ENCODE measurements at regions of chr17 and their contacts with region 1.

Region 1: DNA sequence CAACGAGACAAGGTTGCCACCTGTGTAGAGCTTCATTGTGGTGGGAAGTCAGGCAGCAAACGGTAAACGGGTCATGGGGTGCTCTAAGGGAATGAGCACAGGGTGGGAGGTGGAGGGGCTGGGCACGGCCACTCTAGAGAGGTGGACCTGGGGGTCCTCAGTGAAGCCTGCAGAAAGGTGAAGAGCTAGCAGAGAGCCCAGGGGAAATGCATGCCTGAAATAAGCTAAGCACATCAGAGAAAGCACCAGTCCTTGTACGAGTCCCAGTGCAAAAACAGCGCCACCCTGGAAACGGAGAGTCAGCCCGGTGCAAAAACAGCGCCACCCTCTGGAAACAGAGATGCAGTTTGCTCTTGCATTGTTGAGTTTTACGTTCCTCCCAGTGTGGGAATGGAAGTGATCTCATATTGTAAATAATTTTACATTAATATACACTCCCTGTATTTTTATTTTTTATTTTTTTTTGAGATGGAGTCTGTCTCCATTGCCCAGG is 65.0 kb downstream of the TBC1D16 start:
- DNase-seq: no peak
- H3K4me3 ChIP-seq: no peak overlapping the region
- H3K27ac ChIP-seq: no peak overlapping the region
- H3K4me1 ChIP-seq: peaks cover 0 to 4% (median 2%) of the 10 kb centered on the region in 4 experiments; a peak in 4 of 7 replicates
- H3K27me3 ChIP-seq: no peaks in the 10 kb centered on the region
- CTCF ChIP-seq: peak; percentile 87 to 98 (median 95)
- EP300 ChIP-seq: no peak
- POLR2A ChIP-seq: no peak
- RAD21 ChIP-seq: peak; percentile 77 to 85

Region 2: GRCh38 chr17:79844869-79845600 is 125.6 kb before region 1 on chr17:
- CTCF ChIA-PET with region 1: interaction called, 10 read pairs
- POLR2A ChIA-PET with region 1: no interaction called
- DNase-seq: peak in 1 of 2 experiments; percentile 88
- H3K4me3 ChIP-seq: peak overlapping the region in 3 of 4 experiments; percentile 20 to 60 (median 23); a peak in 4 of 8 replicates
- H3K27ac ChIP-seq: no peak overlapping the region
- H3K4me1 ChIP-seq: peaks cover 0 to 23% (median 15%) of the 10 kb centered on the region in 4 experiments; a peak in 5 of 7 replicates
- H3K27me3 ChIP-seq: peaks cover 57 to 64% (median 63%) of the 10 kb centered on the region in 4 experiments
- CTCF ChIP-seq: peak; percentile 67 to 88 (median 84)
- EP300 ChIP-seq: 0 out of 3 replicates have a peak, but pooled peaks of 1 of the 2 experiments have one; percentile 15
- POLR2A ChIP-seq: no peak
- RAD21 ChIP-seq: peak; percentile 55 to 77

Region 3: DNA sequence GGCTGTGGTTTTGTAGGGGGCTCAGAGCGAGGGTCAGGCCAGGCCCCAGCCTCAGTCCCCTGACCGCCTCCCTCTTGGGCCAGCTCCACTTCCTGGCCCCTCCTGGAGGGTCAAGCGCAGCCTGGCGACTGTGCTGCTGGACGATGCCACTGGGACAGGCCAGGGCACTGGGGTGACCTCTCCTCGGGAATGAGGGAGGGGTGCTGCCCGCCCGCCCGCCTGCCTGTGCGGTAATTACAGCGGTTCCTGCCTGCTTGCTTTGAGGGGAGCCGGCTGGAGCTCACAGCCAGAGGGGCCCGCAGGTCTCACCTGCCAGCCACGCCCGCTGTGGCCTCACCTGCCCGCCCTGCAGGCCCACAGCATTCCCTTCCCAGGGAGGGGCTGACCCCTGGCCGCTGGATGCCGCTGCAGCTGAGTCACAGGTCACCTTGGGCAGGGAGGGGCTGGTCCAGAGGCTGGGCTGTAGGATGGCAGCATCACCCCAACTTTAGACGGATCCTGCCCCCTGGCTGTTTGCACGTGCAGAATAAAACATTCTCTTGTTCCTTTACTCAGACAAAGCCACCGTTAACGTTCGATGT is 54.7 kb before region 1 on chr17:
- CTCF ChIA-PET with region 1: interaction called, 16 read pairs
- POLR2A ChIA-PET with region 1: no interaction called
- DNase-seq: peak; percentile 64 to 74
- H3K4me3 ChIP-seq: no peak overlapping the region
- H3K27ac ChIP-seq: no peak overlapping the region
- H3K4me1 ChIP-seq: peaks cover 0 to 8% (median 4%) of the 10 kb centered on the region in 4 experiments; a peak in 5 of 7 replicates
- H3K27me3 ChIP-seq: no peaks in the 10 kb centered on the region; a peak in 2 of 7 replicates
- CTCF ChIP-seq: peak; percentile 52 to 69 (median 68)
- EP300 ChIP-seq: no peak
- POLR2A ChIP-seq: no peak
- RAD21 ChIP-seq: peak; percentile 79 to 82

Region 4: DNA sequence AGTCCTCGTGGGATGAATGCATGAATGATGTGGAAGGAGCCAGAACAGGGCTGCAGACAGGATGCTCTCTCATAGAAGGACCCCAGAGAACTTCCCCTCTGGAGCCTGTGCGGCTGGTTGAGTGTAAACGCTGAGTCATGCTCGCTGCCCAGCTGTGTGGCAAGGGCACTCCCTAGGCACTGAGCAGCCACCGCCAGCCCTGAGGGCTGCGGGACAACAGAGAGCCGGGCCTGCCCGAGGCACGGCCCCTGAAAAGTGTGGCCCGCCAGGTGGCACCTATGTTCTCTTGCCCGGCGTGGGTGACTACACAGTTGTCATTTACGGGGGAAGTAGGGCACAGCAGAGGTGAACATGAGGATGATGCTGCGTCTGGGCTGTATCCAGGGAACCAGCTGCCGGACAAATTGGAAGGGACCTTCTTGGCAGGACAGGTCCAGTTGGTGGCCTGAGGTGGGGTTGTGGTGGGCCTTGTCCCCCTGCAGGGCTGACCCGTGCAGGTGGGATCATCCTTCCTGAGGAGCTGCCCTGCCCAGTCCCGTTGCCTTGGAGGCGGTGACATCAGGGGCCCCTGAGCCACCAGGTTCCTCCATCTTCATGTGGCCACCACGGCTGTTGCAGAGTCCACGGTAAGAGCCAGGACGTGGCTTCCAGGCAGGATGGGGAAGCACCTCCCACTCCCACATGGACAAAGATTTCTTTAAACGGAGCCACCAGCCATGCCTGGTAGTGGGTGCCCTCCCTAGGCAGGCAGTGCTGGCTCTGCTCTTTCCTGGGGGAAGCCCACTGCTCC is 36.6 kb before region 1 on chr17:
- CTCF ChIA-PET with region 1: interaction called, 25 read pairs
- POLR2A ChIA-PET with region 1: interaction called, 21 read pairs
- DNase-seq: no peak
- H3K4me3 ChIP-seq: no peak overlapping the region
- H3K27ac ChIP-seq: no peak overlapping the region; the same call in 1 of the 2 replicates
- H3K4me1 ChIP-seq: peaks cover 3 to 46% (median 29%) of the 10 kb centered on the region in 4 experiments
- H3K27me3 ChIP-seq: peaks cover 0 to 3% (median 1%) of the 10 kb centered on the region in 4 experiments; a peak in 2 of 7 replicates
- CTCF ChIP-seq: no peak
- EP300 ChIP-seq: no peak
- POLR2A ChIP-seq: no peak; a peak in 1 of 3 replicates
- RAD21 ChIP-seq: no peak

Region 5: DNA sequence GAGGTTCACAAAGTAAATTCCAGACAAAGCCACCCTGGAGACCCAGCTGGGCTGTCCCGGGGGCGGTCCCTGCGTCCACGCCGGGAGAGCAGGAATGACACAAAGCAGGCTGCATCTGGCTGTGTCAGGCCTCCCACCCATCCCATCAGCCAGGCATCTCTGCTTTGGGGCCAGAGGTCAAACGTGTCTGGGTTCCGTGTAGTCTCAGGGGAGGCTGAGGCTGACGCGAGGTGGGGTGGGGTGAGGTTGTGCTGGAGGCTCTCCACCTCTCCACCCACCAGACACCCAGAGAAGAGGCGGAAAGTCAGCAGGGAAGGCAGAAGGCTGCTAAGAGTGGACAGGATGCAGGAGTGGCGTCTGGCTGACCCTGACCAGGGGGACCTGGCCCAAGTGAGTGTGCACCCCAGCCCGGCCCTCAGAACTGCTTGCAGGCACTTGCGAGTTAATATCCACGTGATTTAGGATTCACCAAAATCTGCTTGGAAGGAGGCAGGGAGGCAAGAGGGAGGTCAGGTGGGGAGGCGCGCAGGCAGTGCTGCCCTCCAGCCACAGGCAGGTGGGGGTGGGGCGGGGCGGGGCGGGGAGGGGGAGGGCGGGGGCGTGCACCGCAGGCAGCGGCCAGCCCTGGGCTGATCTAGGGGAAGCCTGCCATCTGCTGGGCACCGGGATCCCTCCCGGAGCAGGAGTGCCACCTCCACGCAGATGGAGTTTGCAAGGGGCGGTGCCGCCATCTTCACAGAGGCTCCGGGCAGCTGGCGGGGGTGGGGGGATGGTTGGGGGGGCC is 20.7 kb after region 1 on chr17:
- CTCF ChIA-PET with region 1: interaction called, 29 read pairs
- POLR2A ChIA-PET with region 1: interaction called, 4 read pairs
- DNase-seq: peak; percentile 44 to 90
- H3K4me3 ChIP-seq: peak overlapping the region in 1 of 4 experiments; percentile 55; a peak in 3 of 8 replicates
- H3K27ac ChIP-seq: peak overlapping the region; percentile 53; the same call in 1 of the 2 replicates
- H3K4me1 ChIP-seq: peaks cover 15 to 37% (median 28%) of the 10 kb centered on the region in 4 experiments
- H3K27me3 ChIP-seq: peaks cover 0 to 2% (median 0%) of the 10 kb centered on the region in 4 experiments; a peak in 2 of 7 replicates
- CTCF ChIP-seq: peak; percentile 60 to 86 (median 75)
- EP300 ChIP-seq: no peak
- POLR2A ChIP-seq: no peak
- RAD21 ChIP-seq: peak; percentile 64 to 74

Region 6: GRCh38 chr17:80047192-80047591 is 76.6 kb after region 1 on chr17:
- CTCF ChIA-PET with region 1: no interaction called
- POLR2A ChIA-PET with region 1: no interaction called
- DNase-seq: no peak
- H3K4me3 ChIP-seq: no peak overlapping the region
- H3K27ac ChIP-seq: no peak overlapping the region
- H3K4me1 ChIP-seq: no peaks in the 10 kb centered on the region; a peak in 2 of 7 replicates
- H3K27me3 ChIP-seq: no peaks in the 10 kb centered on the region
- CTCF ChIP-seq: no peak
- EP300 ChIP-seq: no peak
- POLR2A ChIP-seq: no peak
- RAD21 ChIP-seq: no peak

Measured in H1 (cell line).